Activated CD4-positive, alpha-beta memory T cell treated with anti-CD3 and anti-CD28 coated beads for 36 hours (primary cell): ENCODE measurements at regions of chrX and their contacts with region 1.

Region 1: GRCh38 chrX:71532753-71533425 is at the start of gene OGT:
- DNase-seq: peak; percentile 95
- H3K4me3 Mint-ChIP-seq: peak within 1 kb of the TSS; percentile 97
- H3K27ac Mint-ChIP-seq: peak within 1 kb of the TSS; percentile 98
- H3K4me1 Mint-ChIP-seq: peaks cover 21% of the 10 kb centered on the region
- H3K27me3 Mint-ChIP-seq: no peaks in the 10 kb centered on the region
- total RNA-seq, gene OGT: 280 to 304 TPM

Region 2: DNA sequence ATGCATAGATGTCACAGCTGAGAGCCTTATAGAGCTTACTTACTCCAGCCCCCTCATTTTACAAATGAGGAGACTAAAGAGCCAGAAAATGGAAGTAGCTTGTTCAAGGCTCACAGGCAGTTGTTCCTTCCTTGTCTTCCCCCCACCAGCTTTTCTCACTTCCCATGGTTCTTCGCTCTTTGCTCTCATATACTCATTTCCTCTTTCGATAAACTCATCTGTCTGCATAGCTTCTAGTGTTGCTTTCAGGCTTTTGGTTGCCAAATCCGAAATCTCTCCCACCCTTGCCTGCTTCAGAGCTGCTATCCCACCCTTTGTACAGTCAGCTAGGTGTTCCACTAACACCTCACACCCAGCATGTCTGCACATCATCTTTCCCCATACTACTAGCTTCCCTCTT is 334.8 kb before region 1 on chrX:
- CTCF ChIA-PET with region 1: no interaction called
- POLR2A ChIA-PET with region 1: no interaction called
- intact Hi-C with region 1: loop called (anchors 10 kb)
- DNase-seq: peak; percentile 27
- H3K4me3 Mint-ChIP-seq: peak overlapping the region; percentile 92
- H3K27ac Mint-ChIP-seq: peak overlapping the region; percentile 93
- H3K4me1 Mint-ChIP-seq: peaks cover 3% of the 10 kb centered on the region
- H3K27me3 Mint-ChIP-seq: no peaks in the 10 kb centered on the region

Region 3: GRCh38 chrX:71365876-71366673 is 166.8 kb before region 1 on chrX and contains the start of gene TAF1:
- CTCF ChIA-PET with region 1: no interaction called
- POLR2A ChIA-PET with region 1: interaction called, 19 read pairs
- intact Hi-C with region 1: loop called (anchors 2 kb)
- DNase-seq: peak; percentile 95
- H3K4me3 Mint-ChIP-seq: peak within 1 kb of the TSS; percentile 91
- H3K27ac Mint-ChIP-seq: peak within 1 kb of the TSS; percentile 99
- H3K4me1 Mint-ChIP-seq: peaks cover 17% of the 10 kb centered on the region
- H3K27me3 Mint-ChIP-seq: no peaks in the 10 kb centered on the region
- total RNA-seq, gene TAF1: 24.3 to 26.3 TPM

Region 4: DNA sequence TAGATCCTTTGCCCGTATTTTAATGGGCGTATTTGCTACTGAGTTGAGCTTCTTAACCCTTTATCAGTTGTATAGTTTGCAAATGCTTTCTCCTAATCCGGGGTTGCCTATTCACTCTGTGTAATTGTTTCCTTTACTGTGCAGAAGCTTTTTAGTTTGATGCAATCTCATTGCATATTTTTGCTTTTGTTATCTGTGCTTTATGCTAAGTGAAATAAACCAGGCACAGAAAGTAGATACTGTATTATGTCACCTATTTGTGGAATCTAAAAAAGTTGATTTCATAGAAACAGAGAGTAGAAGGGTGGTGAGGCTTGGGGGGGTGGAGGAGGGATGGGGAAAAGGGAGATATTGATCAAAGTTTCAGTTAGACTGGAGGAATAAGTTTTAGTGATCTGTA is 17.7 kb after region 1 on chrX:
- CTCF ChIA-PET with region 1: interaction called, 3 read pairs
- POLR2A ChIA-PET with region 1: interaction called, 96 read pairs
- intact Hi-C with region 1: no loop called
- DNase-seq: no peak
- H3K4me3 Mint-ChIP-seq: no peak overlapping the region
- H3K27ac Mint-ChIP-seq: peak overlapping the region; percentile 51
- H3K4me1 Mint-ChIP-seq: peaks cover 29% of the 10 kb centered on the region
- H3K27me3 Mint-ChIP-seq: no peaks in the 10 kb centered on the region

Region 5: GRCh38 chrX:71637848-71638247 is 105.0 kb after region 1 on chrX:
- CTCF ChIA-PET with region 1: no interaction called
- POLR2A ChIA-PET with region 1: interaction called, 5 read pairs
- intact Hi-C with region 1: loop called (anchors 5 kb)
- DNase-seq: peak; percentile 37
- H3K4me3 Mint-ChIP-seq: no peak overlapping the region
- H3K27ac Mint-ChIP-seq: no peak overlapping the region
- H3K4me1 Mint-ChIP-seq: peaks cover 17% of the 10 kb centered on the region
- H3K27me3 Mint-ChIP-seq: no peaks in the 10 kb centered on the region